ENCODE measurements at regions of chr19 and their contacts with region 1.

Region 1: DNA sequence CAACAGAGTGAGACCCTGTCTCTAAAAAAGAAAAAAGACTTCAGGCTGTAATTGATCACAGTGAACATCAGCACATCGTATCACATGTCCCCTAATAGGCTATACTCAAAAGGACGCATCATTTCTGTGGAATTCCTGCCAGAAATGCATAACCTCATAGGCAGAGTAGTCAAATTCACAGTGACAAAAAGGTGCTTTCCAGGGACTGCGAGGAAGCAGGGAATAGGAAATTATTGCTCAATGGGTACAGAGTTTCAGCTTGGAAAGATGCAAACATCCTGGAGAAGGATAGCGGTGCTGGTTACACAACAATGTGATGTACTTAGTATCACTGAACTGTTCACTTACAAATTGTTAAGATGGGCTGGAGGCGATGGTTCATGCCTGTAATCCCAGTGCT is 41.1 kb upstream of the MRI1 start:
- DNase-seq: no peak
- H3K4me3 ChIP-seq: no peak overlapping the region
- H3K4me3 Mint-ChIP-seq: no peak overlapping the region
- H3K27ac ChIP-seq: no peak overlapping the region
- H3K27ac Mint-ChIP-seq: no peak overlapping the region
- H3K4me1 ChIP-seq: no peaks in the 10 kb centered on the region
- H3K4me1 Mint-ChIP-seq: no peaks in the 10 kb centered on the region
- H3K27me3 ChIP-seq: no peaks in the 10 kb centered on the region
- H3K27me3 Mint-ChIP-seq: peaks cover 1 to 4% of the 10 kb centered on the region in 2 donors

Region 2: GRCh38 chr19:13597640-13598039 is 125.6 kb before region 1 on chr19:
- CTCF ChIA-PET with region 1: no interaction called
- POLR2A ChIA-PET with region 1: no interaction called
- intact Hi-C with region 1: loop called (anchors 5 kb)
- DNase-seq: peak; percentile 44 to 55 (median 49)
- H3K4me3 ChIP-seq: no peak overlapping the region
- H3K4me3 Mint-ChIP-seq: no peak overlapping the region
- H3K27ac ChIP-seq: no peak overlapping the region
- H3K27ac Mint-ChIP-seq: no peak overlapping the region
- H3K4me1 ChIP-seq: no peaks in the 10 kb centered on the region
- H3K4me1 Mint-ChIP-seq: peaks cover 0 to 2% (median 0%) of the 10 kb centered on the region in 4 donors
- H3K27me3 ChIP-seq: no peaks in the 10 kb centered on the region
- H3K27me3 Mint-ChIP-seq: peaks cover 15 to 16% of the 10 kb centered on the region in 2 donors